Gastrocnemius medialis (tissue), 4 donors: ENCODE measurements at regions of chr10 and their contacts with region 1.

Region 1: DNA sequence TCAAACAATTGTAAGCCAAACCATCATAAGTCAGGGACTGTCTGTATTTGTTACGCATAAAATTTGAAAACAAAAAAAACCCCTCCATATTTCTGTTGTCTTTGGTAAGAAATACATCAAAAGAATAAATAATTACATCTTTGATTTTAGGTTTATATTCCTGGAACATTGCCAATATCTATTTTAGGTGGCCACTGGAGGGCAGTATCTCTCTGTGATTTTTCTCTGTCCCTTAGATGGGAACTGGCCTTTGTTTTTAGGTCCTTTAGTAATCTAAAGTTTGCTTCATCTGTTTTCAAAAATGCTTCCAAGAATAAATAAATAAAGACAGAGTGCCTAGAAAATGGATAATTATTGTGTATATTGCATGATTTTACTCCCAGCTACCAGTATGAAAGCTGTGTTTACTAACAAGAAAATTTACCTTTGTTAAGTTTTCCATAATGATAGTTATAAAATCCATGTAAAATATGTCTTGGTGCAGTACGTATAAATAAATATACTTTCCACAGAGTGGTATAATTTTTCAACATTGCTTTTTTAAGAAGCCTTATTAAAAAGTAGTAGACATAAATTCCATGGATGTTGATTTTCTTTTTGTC is 64.2 kb downstream of the PHYHIPL start:
- DNase-seq: no peak
- ATAC-seq: peak in 1 of 2 donors; percentile 48
- H3K4me3 ChIP-seq: no peak overlapping the region
- H3K27ac ChIP-seq: peak overlapping the region in 1 of 4 donors; percentile 9
- H3K4me1 ChIP-seq: peaks cover 0 to 8% of the 10 kb centered on the region in 2 donors
- H3K27me3 ChIP-seq: no peaks in the 10 kb centered on the region
- CTCF ChIP-seq: peak; percentile 69 to 81 (median 70)
- POLR2A ChIP-seq: no peak

Region 2: GRCh38 chr10:58781873-58782488 is 458.7 kb before region 1 on chr10:
- in situ Hi-C with region 1: loop called in 1 of 4 experiments (anchors 25 kb)
- intact Hi-C with region 1: loop called (anchors 5 kb)
- DNase-seq: no peak
- ATAC-seq: peak; percentile 50 to 61
- H3K4me3 ChIP-seq: no peak overlapping the region
- H3K27ac ChIP-seq: peak overlapping the region; percentile 13 to 55 (median 40)
- H3K4me1 ChIP-seq: peaks cover 10 to 12% of the 10 kb centered on the region in 2 donors
- H3K27me3 ChIP-seq: no peaks in the 10 kb centered on the region
- CTCF ChIP-seq: peak in 4 of 5 experiments; percentile 33 to 60 (median 53)
- POLR2A ChIP-seq: no peak

Region 3: DNA sequence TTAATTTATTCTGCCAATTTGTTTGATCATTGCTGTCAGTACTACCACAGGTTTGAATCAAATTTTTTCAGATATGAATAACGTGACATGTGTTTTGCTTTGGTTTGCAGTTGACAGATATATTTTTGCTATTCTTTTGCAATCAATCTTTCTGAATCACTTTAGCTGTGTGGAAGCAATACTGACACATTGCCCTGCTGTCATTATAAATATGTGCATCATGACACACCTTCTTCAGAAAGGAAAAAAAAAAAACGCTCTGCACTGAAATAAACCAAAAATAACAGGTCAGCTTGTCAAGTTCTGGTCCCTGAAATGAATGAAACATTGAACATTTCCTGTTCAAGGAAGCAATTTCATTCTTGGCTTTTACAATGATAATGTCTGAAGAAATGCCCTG is 215.5 kb after region 1 on chr10:
- in situ Hi-C with region 1: loop called in 1 of 4 experiments (anchors 10 kb)
- intact Hi-C with region 1: no loop called
- DNase-seq: no peak
- ATAC-seq: no peak
- H3K4me3 ChIP-seq: no peak overlapping the region
- H3K27ac ChIP-seq: no peak overlapping the region
- H3K4me1 ChIP-seq: no peaks in the 10 kb centered on the region
- H3K27me3 ChIP-seq: no peaks in the 10 kb centered on the region
- CTCF ChIP-seq: no peak
- POLR2A ChIP-seq: no peak

Region 4: DNA sequence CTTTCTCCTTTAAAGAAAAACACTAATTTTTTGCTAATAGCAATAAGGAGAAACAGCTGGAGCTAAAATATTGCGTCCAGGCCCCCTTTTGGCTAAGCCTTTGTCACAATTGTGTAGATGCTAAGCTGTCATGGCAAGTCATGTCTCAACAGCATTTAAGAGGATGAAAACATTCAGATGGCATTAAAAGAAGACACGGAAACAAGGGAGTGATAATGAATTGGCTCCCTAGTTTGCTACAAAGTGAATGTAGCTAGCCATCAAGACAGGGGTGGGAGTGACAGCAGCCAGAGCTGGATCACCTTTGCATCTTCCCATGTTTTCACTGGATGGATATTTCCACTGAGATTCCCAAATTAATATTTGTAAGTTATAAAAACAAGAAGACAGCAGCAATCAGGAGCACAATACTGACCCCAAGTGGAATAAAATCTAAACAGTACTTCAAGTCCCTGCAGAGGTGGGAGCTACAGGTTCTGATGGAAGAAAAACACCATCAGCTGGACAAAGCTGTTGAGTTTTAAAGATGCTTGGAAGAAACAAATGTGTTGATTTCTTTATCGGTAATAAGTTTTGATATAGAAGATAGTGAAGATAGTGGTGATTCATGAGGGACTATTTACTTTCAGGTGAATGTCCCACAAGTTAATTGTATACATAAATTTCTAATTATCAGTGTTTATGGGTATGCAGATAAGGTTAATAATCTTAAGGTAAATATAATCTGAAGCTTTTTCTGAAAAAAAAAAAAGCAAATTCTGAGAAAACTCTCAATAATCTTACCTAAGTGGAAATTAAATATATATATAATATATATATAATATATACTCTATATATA is 339.6 kb after region 1 on chr10:
- in situ Hi-C with region 1: no loop called
- intact Hi-C with region 1: loop called (anchors 2 kb)
- DNase-seq: no peak
- ATAC-seq: no peak
- H3K4me3 ChIP-seq: no peak overlapping the region
- H3K27ac ChIP-seq: no peak overlapping the region
- H3K4me1 ChIP-seq: peaks cover 0 to 5% of the 10 kb centered on the region in 2 donors
- H3K27me3 ChIP-seq: no peaks in the 10 kb centered on the region
- CTCF ChIP-seq: peak in 2 of 5 experiments; percentile 11 to 43
- POLR2A ChIP-seq: no peak

Region 5: GRCh38 chr10:59808896-59809643 is 568.4 kb after region 1 on chr10:
- in situ Hi-C with region 1: loop called (anchors 10 to 25 kb)
- intact Hi-C with region 1: loop called (anchors 10 kb)
- DNase-seq: peak; percentile 82 to 87
- ATAC-seq: peak; percentile 83 to 88
- H3K4me3 ChIP-seq: no peak overlapping the region
- H3K27ac ChIP-seq: peak overlapping the region; percentile 61 to 86 (median 66)
- H3K4me1 ChIP-seq: peaks cover 24 to 33% of the 10 kb centered on the region in 2 donors
- H3K27me3 ChIP-seq: no peaks in the 10 kb centered on the region
- CTCF ChIP-seq: peak; percentile 71 to 85 (median 81)
- POLR2A ChIP-seq: no peak

Region 6: DNA sequence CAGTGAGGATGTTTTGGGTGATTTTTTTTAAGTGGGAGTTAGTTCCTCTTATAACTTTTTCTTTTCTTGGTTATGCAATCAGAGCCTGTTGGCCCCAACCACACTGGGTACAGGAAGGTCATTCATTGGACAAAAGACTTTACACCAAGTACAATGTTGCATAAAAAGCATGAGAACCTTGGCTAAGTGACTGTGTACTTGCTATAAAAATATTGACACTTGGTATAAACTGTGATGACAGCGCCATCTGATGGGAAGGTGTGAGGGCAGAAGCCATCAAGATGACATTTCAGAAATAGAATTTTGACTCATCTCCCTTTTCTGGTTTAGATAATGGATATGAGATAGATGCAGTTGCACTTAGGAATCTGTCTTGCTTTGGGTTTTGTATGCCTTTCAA is 792.0 kb after region 1 on chr10:
- in situ Hi-C with region 1: loop called in 3 of 4 experiments (anchors 10 to 25 kb)
- intact Hi-C with region 1: loop called (anchors 10 kb)
- DNase-seq: peak; percentile 67 to 81
- ATAC-seq: peak; percentile 91 to 96
- H3K4me3 ChIP-seq: no peak overlapping the region
- H3K27ac ChIP-seq: peak overlapping the region; percentile 83 to 93 (median 87)
- H3K4me1 ChIP-seq: peaks cover 16 to 24% of the 10 kb centered on the region in 2 donors
- H3K27me3 ChIP-seq: no peaks in the 10 kb centered on the region
- CTCF ChIP-seq: peak; percentile 40 to 65 (median 53)
- POLR2A ChIP-seq: no peak